Keratinocyte (primary cell): ENCODE measurements at regions of chr16 and their contacts with region 1.

Region 1: GRCh38 chr16:26727848-26728247 is 338.9 kb upstream of the C16orf82 start:
- DNase-seq: no peak
- H3K4me3 ChIP-seq: no peak overlapping the region
- H3K27ac ChIP-seq: no peak overlapping the region
- H3K4me1 ChIP-seq: no peaks in the 10 kb centered on the region
- H3K27me3 ChIP-seq: no peaks in the 10 kb centered on the region
- CTCF ChIP-seq: no peak

Region 2: DNA sequence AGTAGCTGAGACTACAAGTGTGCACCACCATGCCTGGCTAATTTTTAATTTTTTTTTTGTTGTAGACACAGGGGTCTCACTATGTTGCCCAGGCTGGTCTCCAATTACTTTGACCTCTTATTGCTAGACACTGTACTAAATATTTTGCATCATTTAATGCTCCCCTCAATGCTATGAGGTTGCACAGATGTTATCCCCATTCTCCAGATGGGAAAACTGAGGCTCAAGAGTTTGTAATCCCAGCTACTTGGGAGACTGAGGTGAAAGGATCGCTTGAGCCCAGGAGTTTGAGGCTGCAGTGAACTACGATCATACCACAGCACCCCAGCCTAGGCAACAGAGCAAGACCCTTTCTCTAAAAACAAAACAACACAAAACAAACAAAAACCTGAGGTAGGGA is 104.4 kb before region 1 on chr16:
- dilution Hi-C with region 1: no loop called
- DNase-seq: no peak
- H3K4me3 ChIP-seq: no peak overlapping the region
- H3K27ac ChIP-seq: no peak overlapping the region
- H3K4me1 ChIP-seq: no peaks in the 10 kb centered on the region
- H3K27me3 ChIP-seq: no peaks in the 10 kb centered on the region
- CTCF ChIP-seq: no peak

Region 3: DNA sequence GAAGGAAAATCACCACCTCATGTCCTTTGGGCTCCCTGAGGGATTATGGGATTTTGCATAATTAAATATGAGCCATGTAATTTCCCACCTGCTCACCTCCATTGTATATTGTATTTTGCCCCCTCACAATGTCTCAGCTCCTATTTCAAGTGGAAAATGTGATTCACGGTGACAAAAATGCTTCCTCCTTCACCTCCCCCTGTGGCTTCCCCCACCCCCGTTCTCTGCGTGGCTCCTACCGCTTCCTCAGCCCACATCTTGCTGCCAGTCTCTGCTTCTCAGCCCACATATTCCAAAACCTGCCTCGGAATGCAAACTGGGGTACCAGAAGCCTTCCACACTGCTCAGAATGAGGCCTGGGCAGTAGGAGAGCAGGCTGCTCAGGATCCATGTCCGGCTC is 55.6 kb before region 1 on chr16:
- dilution Hi-C with region 1: no loop called
- DNase-seq: no peak
- H3K4me3 ChIP-seq: no peak overlapping the region
- H3K27ac ChIP-seq: no peak overlapping the region
- H3K4me1 ChIP-seq: no peaks in the 10 kb centered on the region
- H3K27me3 ChIP-seq: no peaks in the 10 kb centered on the region
- CTCF ChIP-seq: no peak

Region 4: DNA sequence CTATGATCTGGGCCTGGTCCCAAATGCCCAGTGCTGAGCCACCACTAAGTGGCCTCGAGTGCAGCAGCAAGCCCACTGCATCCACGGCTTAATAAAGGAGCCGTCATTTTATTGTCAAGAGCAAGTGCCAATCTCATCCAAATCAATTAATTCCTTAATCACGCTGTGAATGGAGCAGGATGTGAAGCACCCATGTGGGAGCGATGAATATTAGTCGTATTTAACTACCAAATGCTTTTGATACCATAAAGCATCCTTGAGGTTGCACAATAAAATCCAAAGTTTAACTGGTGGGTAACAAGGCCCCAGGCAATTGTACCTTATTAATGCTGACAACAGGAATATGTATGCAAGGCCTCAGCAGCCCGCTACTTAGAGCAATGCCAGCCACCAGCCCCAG is 112.8 kb after region 1 on chr16:
- dilution Hi-C with region 1: loop called (anchors 10 kb)
- DNase-seq: no peak
- H3K4me3 ChIP-seq: no peak overlapping the region
- H3K27ac ChIP-seq: no peak overlapping the region
- H3K4me1 ChIP-seq: no peaks in the 10 kb centered on the region
- H3K27me3 ChIP-seq: no peaks in the 10 kb centered on the region
- CTCF ChIP-seq: no peak